ENCODE measurements at regions of chr20 and their contacts with region 1.

Region 1: DNA sequence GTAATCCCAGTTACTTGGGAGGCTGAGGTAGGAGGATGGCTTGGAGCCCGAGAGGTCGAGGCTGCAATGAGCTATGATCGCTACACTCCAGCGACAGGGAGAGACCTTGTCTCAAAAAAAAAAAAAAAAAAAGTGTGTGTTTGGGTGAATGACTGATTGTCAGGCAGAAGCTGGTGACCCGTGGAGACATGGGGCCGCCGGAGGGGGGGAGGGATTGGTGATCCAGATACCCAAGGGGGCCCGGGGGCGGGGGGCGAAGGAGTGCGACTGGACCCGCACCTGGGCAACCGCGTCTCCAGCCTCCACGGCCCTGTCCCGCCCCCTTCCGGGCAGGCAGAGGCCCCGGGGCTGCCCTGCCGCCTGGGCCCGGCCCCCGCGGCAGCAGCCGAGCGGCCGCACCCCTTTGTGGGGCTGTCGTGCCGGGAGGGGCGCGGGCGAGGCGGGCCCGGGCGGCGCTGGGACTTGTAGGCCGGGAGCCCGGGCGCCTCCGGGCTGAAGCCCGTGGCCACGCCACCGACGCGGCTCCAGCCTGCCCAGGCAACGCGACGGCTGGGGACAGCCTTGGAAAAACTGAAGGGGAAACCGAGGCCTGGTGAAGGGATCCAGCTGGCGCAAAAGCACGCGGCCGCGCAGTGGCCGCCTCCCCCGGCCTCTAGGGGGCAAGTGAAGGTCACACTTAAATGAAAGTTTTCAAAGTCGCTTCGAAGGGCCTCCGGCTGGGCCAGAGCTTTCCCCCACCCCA is 2.1 kb upstream of the RBM38 start:
- DNase-seq: peak; percentile 61
- H3K4me3 ChIP-seq: peak overlapping the region; percentile 23
- H3K27ac ChIP-seq: peak overlapping the region; percentile 50
- H3K4me1 ChIP-seq: peaks cover 18% of the 10 kb centered on the region
- H3K27me3 ChIP-seq: no peaks in the 10 kb centered on the region
- CTCF ChIP-seq: no peak

Region 2: GRCh38 chr20:57131601-57132391 is 257.3 kb before region 1 on chr20:
- CTCF ChIA-PET with region 1: no interaction called
- POLR2A ChIA-PET with region 1: interaction called, 14 read pairs
- intact Hi-C with region 1: no loop called
- DNase-seq: no peak
- H3K4me3 ChIP-seq: no peak overlapping the region
- H3K27ac ChIP-seq: no peak overlapping the region
- H3K4me1 ChIP-seq: peaks cover 6% of the 10 kb centered on the region
- H3K27me3 ChIP-seq: no peaks in the 10 kb centered on the region
- CTCF ChIP-seq: no peak

Measured in A673 (cell line).